A673 (cell line): ENCODE measurements at regions of chr4 and their contacts with region 1.

Region 1: DNA sequence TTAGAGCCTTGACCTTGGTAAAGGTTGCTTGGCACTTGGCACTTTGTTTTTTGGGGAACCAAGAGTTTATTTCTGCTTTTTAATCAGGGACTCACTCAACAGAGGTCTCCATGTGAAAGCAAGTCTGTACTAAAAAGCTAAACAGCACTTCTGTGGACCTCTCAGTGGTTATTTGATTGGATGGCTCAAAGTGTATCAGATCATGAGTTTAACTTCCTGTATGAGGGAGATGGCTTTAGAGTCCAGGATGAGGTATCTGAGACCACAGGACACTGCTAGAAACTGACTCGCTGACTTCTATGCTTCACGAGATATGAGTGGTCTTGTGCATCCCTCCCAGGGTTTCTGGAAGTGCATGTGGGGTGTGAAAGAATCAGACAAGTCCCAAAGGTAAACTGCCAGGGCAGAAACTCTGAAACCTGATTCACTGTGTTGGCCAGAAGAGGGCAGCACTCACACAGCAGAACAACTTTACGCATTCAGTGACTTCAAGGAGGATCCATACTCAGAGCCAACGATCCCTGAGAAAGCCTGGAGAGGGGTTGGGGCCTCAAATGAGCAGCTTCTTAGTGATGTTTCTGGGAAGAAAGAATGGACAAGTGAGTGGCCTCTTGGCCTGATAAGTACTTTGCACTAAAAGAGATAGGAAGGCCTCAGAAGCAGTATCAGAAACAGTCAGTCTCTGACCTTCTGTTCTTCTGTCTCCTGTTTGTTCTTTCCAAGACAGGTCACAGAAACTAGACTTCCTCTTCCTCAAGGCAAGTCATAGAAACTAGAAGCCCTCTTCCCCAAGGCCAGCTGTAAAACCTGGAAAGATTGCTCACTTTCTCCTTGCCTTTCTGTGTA is 220.3 kb upstream of the CXCL13 start:
- DNase-seq: peak; percentile 42
- H3K4me3 ChIP-seq: no peak overlapping the region
- H3K27ac ChIP-seq: no peak overlapping the region
- H3K4me1 ChIP-seq: no peaks in the 10 kb centered on the region
- H3K27me3 ChIP-seq: no peaks in the 10 kb centered on the region
- CTCF ChIP-seq: peak; percentile 63

Region 2: GRCh38 chr4:77433418-77433733 is 48.0 kb after region 1 on chr4:
- CTCF ChIA-PET with region 1: no interaction called
- POLR2A ChIA-PET with region 1: no interaction called
- intact Hi-C with region 1: loop called (anchors 2 kb)
- DNase-seq: peak; percentile 28
- H3K4me3 ChIP-seq: no peak overlapping the region
- H3K27ac ChIP-seq: no peak overlapping the region
- H3K4me1 ChIP-seq: no peaks in the 10 kb centered on the region
- H3K27me3 ChIP-seq: no peaks in the 10 kb centered on the region
- CTCF ChIP-seq: peak; percentile 35; the same call in 1 of the 2 replicates

Region 3: DNA sequence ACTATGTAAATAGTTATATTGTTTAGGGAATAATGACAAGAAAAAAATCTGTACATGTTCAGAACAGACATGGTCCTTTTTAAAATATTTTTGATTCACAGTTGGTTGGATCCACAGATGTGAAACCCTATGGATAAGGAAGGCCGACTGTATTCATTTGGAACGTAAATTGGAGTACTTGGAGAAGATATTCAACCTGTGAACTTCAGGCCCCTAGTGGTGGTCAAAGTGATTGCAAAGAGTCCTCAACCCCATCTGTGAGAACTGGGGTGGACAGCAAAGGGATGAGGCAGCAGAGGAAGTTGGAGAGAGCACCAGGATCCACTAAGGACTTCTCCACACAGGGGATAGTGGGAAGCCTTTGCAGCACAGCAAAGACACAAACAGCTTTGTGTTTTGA is 214.0 kb after region 1 on chr4:
- CTCF ChIA-PET with region 1: no interaction called
- POLR2A ChIA-PET with region 1: no interaction called
- intact Hi-C with region 1: loop called (anchors 5 kb)
- DNase-seq: peak; percentile 13
- H3K4me3 ChIP-seq: no peak overlapping the region
- H3K27ac ChIP-seq: no peak overlapping the region
- H3K4me1 ChIP-seq: no peaks in the 10 kb centered on the region
- H3K27me3 ChIP-seq: no peaks in the 10 kb centered on the region
- CTCF ChIP-seq: peak; percentile 36

Region 4: DNA sequence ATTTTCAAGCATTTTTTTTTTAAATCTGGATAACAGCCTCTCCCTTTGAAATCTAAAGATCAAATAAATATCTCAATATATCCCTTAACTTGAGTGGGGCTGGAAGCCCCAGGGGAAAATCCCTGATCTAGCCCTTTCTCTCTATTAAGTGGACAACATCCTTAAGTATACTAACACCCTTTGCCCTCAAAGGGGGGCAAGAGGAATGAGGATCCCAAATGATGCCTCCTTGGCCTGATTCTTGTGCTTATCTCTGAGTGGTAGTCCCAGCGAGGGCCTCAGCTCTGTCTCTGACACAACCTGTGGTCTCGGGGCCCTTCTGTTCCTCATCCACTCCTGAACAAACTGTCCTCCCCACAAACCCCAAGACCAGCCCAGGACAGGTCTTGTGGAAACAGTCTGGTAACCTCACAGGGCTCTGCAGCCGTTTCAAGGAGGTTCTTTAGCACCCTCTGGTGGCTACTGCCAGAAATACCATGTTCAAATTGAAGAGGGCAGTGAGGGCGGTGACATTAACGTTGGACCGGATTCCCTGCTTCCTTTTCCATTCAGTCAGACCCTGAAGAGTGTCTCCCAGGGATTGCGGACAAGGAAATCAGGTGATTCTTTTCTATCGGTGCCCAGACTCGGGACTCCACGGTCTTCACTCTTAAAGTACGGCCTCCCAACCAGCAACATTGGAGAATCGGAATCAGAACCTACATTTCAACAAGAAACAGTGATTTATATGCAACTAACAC is 233.2 kb after region 1 on chr4:
- CTCF ChIA-PET with region 1: no interaction called
- POLR2A ChIA-PET with region 1: no interaction called
- intact Hi-C with region 1: loop called (anchors 5 kb)
- DNase-seq: peak; percentile 54
- H3K4me3 ChIP-seq: no peak overlapping the region
- H3K27ac ChIP-seq: no peak overlapping the region
- H3K4me1 ChIP-seq: no peaks in the 10 kb centered on the region
- H3K27me3 ChIP-seq: peaks cover 14% of the 10 kb centered on the region
- CTCF ChIP-seq: peak; percentile 59